GM12878 (cell line): ENCODE measurements at regions of chr20 and their contacts with region 1.

Region 1: DNA sequence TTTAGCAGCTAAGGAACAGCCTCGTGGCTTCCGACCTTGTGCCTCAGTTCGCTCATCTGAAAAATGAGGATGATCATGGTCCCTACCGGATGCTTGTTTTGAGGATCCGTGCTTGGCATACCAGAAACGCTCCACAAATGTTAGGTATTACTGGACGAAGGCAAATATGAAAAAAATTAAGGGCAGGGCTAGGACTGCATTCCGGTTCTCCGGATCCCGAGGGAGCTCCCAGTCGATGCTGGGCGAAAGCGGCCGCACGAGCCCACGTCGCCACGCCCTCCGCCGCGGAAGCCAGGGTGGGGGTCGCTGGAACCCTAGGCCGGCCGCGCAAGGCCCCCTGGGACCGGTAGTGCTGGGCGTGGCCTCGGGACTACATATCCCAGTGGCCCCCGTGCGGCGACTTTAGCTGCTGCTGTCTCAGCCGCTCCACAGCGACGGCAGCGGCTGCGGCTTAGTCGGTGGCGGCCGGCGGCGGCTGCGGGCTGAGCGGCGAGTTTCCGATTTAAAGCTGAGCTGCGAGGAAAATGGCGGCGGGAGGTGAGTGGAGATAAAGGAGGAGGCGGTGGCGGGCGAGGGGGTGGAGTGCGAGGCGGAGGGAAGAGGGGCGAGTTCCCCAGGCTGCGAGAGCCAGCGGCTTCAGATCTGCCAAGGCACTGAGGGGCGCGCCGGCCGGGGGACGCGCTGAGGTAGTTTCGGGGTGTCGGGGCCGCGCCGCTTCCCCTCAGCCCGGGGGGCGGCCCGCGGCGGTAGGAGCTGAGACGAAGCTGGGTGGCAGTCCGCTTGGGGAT is at the start of gene NCOA3:
- DNase-seq: no peak
- ATAC-seq: peak; percentile 82
- H3K4me3 ChIP-seq: peak within 1 kb of the TSS; percentile 94
- H3K27ac ChIP-seq: peak within 1 kb of the TSS; percentile 92
- H3K4me1 ChIP-seq: peaks cover 30% of the 10 kb centered on the region
- H3K27me3 ChIP-seq: no peaks in the 10 kb centered on the region
- CTCF ChIP-seq: peak; percentile 15 to 43 (median 20); a peak in 3 of 6 replicates
- EP300 ChIP-seq: peak in 1 of 2 experiments; percentile 67; a peak in 2 of 4 replicates
- POLR2A ChIP-seq: peak; percentile 98
- RAD21 ChIP-seq: peak; percentile 24; the same call in 1 of the 2 replicates
- polyA plus RNA-seq, gene NCOA3: 16.9 to 18.0 TPM

Region 2: DNA sequence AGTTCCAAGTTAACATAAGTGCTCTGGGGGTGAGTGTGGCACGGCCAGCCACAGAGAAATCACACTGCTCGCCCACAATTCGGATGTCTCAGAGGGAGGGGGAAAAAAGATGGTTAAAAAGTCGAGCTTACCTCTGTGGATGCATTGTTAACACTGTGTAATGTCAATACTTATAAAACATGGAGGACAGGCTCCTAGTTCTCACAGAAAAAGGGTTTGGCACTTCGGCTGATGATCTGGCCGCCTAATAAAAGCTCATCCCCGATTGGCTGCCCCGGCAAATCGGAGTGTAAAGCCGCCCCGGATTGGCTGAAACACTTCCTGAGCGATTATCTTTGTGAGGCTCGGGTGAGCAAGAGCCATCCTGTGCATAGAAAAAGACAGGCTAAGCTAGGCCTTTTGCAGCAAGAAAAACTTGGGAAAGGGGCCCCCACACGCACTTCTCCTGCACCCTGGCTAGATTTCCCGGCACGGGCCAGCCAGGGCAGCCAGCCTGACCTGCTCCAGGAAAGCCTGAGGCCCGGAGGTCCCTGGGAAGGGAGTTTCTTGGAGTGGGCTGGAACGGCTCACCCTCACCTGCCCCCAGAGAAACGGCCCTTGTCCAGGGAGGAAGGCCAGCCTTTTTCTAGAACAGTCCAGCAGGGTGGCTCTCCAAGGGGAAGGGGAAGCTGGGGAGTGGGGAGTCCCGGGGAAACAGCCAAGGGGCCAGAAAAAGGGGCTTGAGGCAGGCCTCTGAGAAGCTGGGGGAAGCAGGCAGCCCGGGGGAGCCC is 145.0 kb before region 1 on chr20 and contains the start of gene ZMYND8:
- CTCF ChIA-PET with region 1: no interaction called
- POLR2A ChIA-PET with region 1: interaction called, 58 read pairs
- RAD21 ChIA-PET with region 1: interaction called, 7 read pairs
- SMC1A ChIA-PET with region 1: interaction called, 3 read pairs
- in situ Hi-C with region 1: no loop called
- intact Hi-C with region 1: no loop called
- DNase-seq: peak; percentile 95
- ATAC-seq: peak; percentile 73
- H3K4me3 ChIP-seq: peak within 1 kb of the TSS; percentile 77
- H3K27ac ChIP-seq: peak within 1 kb of the TSS; percentile 99
- H3K4me1 ChIP-seq: peaks cover 46% of the 10 kb centered on the region
- H3K27me3 ChIP-seq: no peaks in the 10 kb centered on the region
- CTCF ChIP-seq: no peak
- EP300 ChIP-seq: no peak
- POLR2A ChIP-seq: no peak
- RAD21 ChIP-seq: no peak
- polyA plus RNA-seq, gene ZMYND8: 12.9 to 18.4 TPM

Region 3: GRCh38 chr20:47438577-47439381 is 62.9 kb before region 1 on chr20:
- CTCF ChIA-PET with region 1: interaction called, 3 read pairs
- POLR2A ChIA-PET with region 1: interaction called, 7 read pairs
- RAD21 ChIA-PET with region 1: interaction called, 12 read pairs
- SMC1A ChIA-PET with region 1: interaction called, 5 read pairs
- in situ Hi-C with region 1: no loop called
- intact Hi-C with region 1: no loop called
- DNase-seq: peak; percentile 75
- ATAC-seq: peak; percentile 75
- H3K4me3 ChIP-seq: peak overlapping the region; percentile 39; the same call in 1 of the 2 replicates
- H3K27ac ChIP-seq: peak overlapping the region; percentile 91
- H3K4me1 ChIP-seq: peaks cover 19% of the 10 kb centered on the region
- H3K27me3 ChIP-seq: no peaks in the 10 kb centered on the region
- CTCF ChIP-seq: no peak
- EP300 ChIP-seq: peak; percentile 32 to 78; a peak in 3 of 4 replicates
- POLR2A ChIP-seq: no peak; the same call in 1 of the 2 replicates
- RAD21 ChIP-seq: no peak

Region 4: GRCh38 chr20:47464380-47465101 is 37.1 kb before region 1 on chr20:
- CTCF ChIA-PET with region 1: interaction called, 3 read pairs
- POLR2A ChIA-PET with region 1: interaction called, 6 read pairs
- RAD21 ChIA-PET with region 1: interaction called, 9 read pairs
- SMC1A ChIA-PET with region 1: interaction called, 7 read pairs
- in situ Hi-C with region 1: no loop called
- intact Hi-C with region 1: loop called (anchors 2 kb)
- DNase-seq: no peak
- ATAC-seq: no peak
- H3K4me3 ChIP-seq: no peak overlapping the region
- H3K27ac ChIP-seq: no peak overlapping the region
- H3K4me1 ChIP-seq: peaks cover 27% of the 10 kb centered on the region
- H3K27me3 ChIP-seq: no peaks in the 10 kb centered on the region
- CTCF ChIP-seq: no peak
- EP300 ChIP-seq: no peak
- POLR2A ChIP-seq: no peak
- RAD21 ChIP-seq: no peak

Region 5: GRCh38 chr20:47487175-47487917 is 14.3 kb before region 1 on chr20:
- CTCF ChIA-PET with region 1: interaction called, 17 read pairs
- POLR2A ChIA-PET with region 1: interaction called, 116 read pairs
- RAD21 ChIA-PET with region 1: interaction called, 90 read pairs
- SMC1A ChIA-PET with region 1: interaction called, 125 read pairs
- in situ Hi-C with region 1: no loop called
- intact Hi-C with region 1: loop called (anchors 2 kb)
- DNase-seq: peak; percentile 99
- ATAC-seq: peak; percentile 84
- H3K4me3 ChIP-seq: peak overlapping the region; percentile 43; the same call in 1 of the 2 replicates
- H3K27ac ChIP-seq: peak overlapping the region; percentile 98
- H3K4me1 ChIP-seq: peaks cover 56% of the 10 kb centered on the region
- H3K27me3 ChIP-seq: no peaks in the 10 kb centered on the region
- CTCF ChIP-seq: no peak
- EP300 ChIP-seq: peak; percentile 87 to 92
- POLR2A ChIP-seq: no peak
- RAD21 ChIP-seq: 0 out of 2 replicates have a peak, but pooled peaks have one; percentile 1

Region 6: DNA sequence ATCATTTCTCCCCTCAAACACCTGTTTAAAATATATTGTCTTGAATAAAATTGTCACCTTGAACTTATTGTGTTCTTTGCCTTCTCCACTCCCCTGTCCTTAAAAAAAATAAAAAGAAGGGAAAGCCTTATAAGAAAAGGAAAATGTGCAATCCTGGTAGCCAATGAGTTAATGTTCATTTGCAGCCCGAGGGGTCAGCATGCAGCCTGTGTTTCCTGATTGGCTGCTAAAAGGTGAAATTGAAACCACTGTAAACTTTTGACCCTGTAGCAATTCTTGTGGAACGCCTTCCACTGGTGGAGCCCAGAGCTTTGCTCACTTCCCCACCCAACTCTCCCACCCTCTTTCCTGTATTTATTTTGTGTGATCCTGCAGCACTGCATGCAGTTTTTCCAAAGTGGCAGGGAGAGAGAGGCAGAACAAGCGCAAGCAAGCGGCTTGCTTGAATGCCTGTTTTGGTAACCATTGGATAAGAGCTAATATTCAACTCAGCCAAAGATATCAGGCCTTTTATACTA is 74.9 kb after region 1 on chr20:
- CTCF ChIA-PET with region 1: interaction called, 3 read pairs
- POLR2A ChIA-PET with region 1: interaction called, 3 read pairs
- RAD21 ChIA-PET with region 1: interaction called, 6 read pairs
- SMC1A ChIA-PET with region 1: interaction called, 26 read pairs
- in situ Hi-C with region 1: no loop called
- intact Hi-C with region 1: loop called (anchors 5 kb)
- DNase-seq: peak; percentile 46
- ATAC-seq: peak; percentile 85
- H3K4me3 ChIP-seq: peak overlapping the region; percentile 45
- H3K27ac ChIP-seq: peak overlapping the region; percentile 74
- H3K4me1 ChIP-seq: peaks cover 52% of the 10 kb centered on the region
- H3K27me3 ChIP-seq: no peaks in the 10 kb centered on the region
- CTCF ChIP-seq: no peak
- EP300 ChIP-seq: no peak
- POLR2A ChIP-seq: no peak
- RAD21 ChIP-seq: no peak

Region 7: DNA sequence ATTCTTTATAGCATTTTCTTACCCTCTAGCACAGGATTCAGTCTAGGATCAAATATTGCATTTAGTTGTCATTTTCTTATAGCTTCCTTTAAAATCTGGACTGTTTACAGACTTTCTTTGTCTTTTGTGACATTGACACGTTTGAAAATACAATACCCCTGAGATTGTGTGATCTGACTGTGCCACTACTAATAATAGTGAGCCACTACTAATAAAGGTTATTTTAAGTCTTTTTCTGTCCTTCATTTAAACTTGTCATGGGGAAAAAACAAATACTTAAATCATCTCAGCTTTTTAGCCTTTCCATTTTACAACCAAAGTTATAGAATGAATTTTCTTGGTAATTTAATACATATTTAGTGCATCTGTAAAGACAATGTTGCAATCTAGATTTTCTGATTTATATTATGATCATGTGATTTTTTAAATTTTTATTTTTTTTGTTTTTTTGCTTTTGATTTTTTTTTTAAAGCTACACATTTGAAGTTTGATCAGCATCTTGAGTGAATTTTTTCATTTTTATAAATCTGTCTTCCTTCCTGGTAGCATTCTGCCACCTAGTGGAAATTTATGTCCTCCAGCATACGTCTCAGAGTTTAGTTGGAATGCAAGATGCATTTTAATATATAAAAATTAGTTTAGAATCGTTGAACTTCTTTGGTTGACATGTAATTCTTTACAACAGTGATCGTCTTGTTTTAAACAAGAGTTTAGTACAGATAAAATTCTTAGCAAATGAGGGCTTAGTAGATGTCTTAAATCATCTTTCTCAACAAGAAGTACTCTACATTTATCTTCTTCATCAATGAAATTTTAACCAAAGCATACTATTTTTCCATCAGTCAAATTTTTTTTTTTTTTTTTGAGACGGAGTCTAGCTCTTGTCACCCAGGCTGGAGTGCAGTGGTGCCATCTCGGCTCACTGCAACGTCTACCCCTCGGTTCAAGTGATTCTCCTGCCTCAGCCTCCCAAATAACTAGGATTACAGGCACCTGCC is 119.4 kb after region 1 on chr20:
- CTCF ChIA-PET with region 1: interaction called, 28 read pairs
- POLR2A ChIA-PET with region 1: interaction called, 8 read pairs
- RAD21 ChIA-PET with region 1: interaction called, 16 read pairs
- SMC1A ChIA-PET with region 1: interaction called, 42 read pairs
- in situ Hi-C with region 1: no loop called
- intact Hi-C with region 1: loop called (anchors 2 kb)
- DNase-seq: peak; percentile 32
- ATAC-seq: peak; percentile 79
- H3K4me3 ChIP-seq: no peak overlapping the region
- H3K27ac ChIP-seq: peak overlapping the region; percentile 33
- H3K4me1 ChIP-seq: peaks cover 10% of the 10 kb centered on the region
- H3K27me3 ChIP-seq: no peaks in the 10 kb centered on the region
- CTCF ChIP-seq: peak; percentile 59 to 68 (median 60)
- EP300 ChIP-seq: no peak
- POLR2A ChIP-seq: no peak
- RAD21 ChIP-seq: peak; percentile 89